Right lobe of liver (tissue), 6 donors: ENCODE measurements at regions of chr22 and their contacts with region 1.

Region 1: DNA sequence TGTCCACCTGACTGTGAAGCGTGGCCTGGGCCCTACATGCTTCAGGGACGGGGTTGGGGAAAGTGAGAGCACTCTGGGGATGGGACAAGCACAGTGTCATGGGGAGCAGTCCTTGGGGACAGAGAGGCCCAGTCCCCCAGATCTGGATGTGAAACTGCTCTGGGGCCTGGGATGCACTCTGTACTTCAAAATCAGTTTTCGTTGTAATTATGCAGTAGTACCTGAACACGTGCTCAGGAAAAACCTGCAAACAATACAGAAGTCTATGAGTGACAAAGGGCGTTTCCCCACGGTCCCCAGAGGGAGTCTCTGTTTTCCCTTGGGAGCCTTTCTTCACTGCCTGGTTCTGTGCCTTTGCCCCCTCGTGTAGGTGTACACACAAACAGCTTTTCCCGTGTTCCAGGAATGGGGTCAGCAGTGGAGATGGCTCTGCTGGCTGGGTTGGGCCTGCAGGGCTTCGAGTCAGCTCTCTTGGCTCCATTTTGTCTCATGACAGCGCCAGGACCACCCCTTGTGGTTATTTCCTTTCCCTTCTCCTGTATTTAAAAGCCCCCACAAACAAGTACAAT is 5.2 kb upstream of the TNFRSF13C start:
- DNase-seq: no peak
- ATAC-seq: no peak
- H3K4me3 ChIP-seq: no peak overlapping the region
- H3K27ac ChIP-seq: no peak overlapping the region
- H3K4me1 ChIP-seq: no peaks in the 10 kb centered on the region
- H3K27me3 ChIP-seq: no peaks in the 10 kb centered on the region
- CTCF ChIP-seq: no peak
- POLR2A ChIP-seq: no peak

Region 2: DNA sequence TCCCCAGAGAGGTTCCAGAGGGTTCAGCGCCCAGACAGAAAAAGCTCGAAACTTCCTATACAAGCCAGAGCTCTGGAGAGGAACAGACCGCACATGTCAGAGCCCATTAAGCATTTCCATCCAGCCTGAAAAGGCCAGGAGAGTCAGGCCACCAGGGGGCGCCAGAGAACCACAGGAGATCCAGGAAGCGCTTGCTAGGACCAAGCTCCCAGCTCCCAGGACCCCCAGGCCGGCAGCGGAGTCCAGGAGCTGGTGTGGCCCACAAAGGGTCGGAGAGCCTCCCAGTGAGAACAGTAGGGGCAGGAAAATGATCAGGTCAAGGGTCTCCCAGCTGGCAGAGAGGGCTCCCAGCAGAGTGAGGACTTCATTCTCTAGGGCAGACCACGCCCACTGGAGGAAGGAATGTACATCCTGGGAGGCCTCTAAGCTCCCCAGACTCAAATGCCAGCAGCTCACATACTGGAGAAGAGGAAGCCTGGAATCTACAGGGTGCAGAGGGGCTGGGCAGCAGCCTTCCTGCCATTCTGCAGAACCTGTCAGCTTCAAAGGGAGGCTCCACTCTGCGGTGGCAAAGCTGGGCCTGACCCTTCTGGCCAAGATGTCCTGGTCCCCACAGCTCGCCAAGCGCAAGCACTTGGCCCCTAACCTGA is 234.5 kb before region 1 on chr22:
- intact Hi-C with region 1: loop called in 1 of 2 experiments (anchors 5 kb)
- DNase-seq: peak; percentile 89 to 92 (median 90)
- ATAC-seq: peak; percentile 85 to 91 (median 88)
- H3K4me3 ChIP-seq: peak overlapping the region in 2 of 3 donors; percentile 20 to 21
- H3K27ac ChIP-seq: peak overlapping the region in 1 of 3 donors; percentile 28
- H3K4me1 ChIP-seq: peaks cover 0 to 6% (median 0%) of the 10 kb centered on the region in 4 donors
- H3K27me3 ChIP-seq: no peaks in the 10 kb centered on the region
- CTCF ChIP-seq: peak; percentile 88 to 99 (median 98)
- POLR2A ChIP-seq: no peak